ENCODE measurements at regions of chr14 and their contacts with region 1.

Region 1: GRCh38 chr14:80356413-80356812 is 145.1 kb upstream of the DIO2 start:
- DNase-seq: no peak
- H3K4me3 ChIP-seq: no peak overlapping the region
- H3K27me3 ChIP-seq: no peaks in the 10 kb centered on the region
- CTCF ChIP-seq: peak; percentile 60

Region 2: DNA sequence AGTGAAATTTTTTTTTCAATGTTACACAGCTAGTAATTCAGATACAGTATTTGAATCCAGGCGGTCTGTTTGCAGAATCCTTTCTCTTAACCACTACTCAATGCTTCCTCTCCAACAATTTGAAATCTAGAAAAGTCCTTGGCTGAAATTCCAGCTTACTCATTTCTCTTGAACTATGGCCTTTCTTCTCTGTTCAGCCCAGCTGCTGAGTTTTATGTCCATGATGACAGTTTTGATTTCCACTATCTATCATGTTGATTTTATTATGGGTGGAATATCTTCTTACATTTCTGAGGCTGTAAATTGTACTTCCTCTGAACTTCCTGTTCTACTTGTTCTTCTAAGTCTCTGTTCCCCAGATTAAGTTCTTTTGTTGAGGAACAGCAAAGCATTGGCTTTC is 460.4 kb before region 1 on chr14:
- CTCF ChIA-PET with region 1: no interaction called
- POLR2A ChIA-PET with region 1: no interaction called
- DNase-seq: peak; percentile 8
- H3K4me3 ChIP-seq: no peak overlapping the region
- H3K27me3 ChIP-seq: no peaks in the 10 kb centered on the region
- CTCF ChIP-seq: no peak

Region 3: DNA sequence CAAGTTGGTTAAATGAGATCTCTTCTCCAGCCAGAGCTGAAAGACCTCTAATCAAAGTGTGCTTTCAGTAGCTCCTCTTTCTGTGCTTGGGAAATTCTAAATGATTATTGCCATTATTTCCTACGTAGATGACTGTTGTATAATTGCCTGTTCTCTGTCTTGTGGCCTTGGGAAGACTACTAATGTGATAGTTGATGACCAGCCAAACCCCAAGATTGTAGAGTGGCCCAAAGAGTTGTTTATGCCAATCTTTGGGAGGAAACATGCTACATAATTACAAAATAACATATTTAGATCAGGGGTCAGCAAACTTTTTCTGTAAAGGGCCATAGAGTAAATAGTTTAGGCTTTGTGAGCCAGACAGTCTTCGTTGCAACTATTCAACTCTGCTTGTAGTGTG is 10.0 kb before region 1 on chr14:
- CTCF ChIA-PET with region 1: interaction called, 10 read pairs
- POLR2A ChIA-PET with region 1: no interaction called
- DNase-seq: no peak
- H3K4me3 ChIP-seq: no peak overlapping the region
- H3K27me3 ChIP-seq: no peaks in the 10 kb centered on the region
- CTCF ChIP-seq: no peak

Measured in BJ (cell line).